Caco-2 (cell line): ENCODE measurements at regions of chr5 and their contacts with region 1.

Region 1: DNA sequence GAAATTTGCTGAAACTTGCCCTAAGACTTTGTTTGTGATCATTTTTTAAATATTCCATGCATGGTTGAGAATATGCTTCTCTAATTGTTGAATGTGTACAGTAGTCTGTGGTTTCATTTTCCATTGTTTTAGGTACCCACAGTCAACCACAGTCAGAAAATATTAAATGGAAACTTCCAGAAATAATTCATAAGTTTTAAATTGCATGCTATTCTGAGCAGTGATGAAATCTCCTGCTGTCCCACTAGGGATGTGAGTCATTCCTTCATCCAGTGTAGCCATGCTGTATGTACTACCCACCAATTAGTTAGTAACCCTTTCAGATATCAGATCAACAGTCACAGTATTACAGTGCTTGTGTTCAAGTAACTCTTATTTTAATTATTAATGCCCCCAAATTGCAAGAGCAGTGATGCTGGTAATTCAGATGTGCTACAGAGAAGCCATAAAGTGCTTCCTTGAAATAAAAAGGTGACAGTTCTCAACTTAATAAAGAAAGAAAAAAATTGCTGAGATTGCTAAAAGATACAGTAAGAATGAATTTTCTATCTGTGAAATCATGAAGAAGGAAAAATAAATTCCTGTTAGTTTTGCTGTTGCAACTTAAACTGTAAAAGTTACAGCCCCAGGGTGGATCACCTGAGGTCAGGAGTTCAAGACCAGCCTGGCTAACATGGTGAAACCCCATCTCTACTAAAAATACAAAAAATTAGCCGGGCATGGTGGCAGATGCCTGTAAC is 79.9 kb upstream of the FBXL17 start:
- DNase-seq: no peak
- H3K4me3 ChIP-seq: no peak overlapping the region
- H3K4me3 Mint-ChIP-seq: no peak overlapping the region
- H3K27ac Mint-ChIP-seq: no peak overlapping the region
- H3K4me1 ChIP-seq: no peaks in the 10 kb centered on the region
- H3K4me1 Mint-ChIP-seq: no peaks in the 10 kb centered on the region
- H3K27me3 ChIP-seq: no peaks in the 10 kb centered on the region
- H3K27me3 Mint-ChIP-seq: peaks cover 6% of the 10 kb centered on the region
- CTCF ChIP-seq: no peak

Region 2: DNA sequence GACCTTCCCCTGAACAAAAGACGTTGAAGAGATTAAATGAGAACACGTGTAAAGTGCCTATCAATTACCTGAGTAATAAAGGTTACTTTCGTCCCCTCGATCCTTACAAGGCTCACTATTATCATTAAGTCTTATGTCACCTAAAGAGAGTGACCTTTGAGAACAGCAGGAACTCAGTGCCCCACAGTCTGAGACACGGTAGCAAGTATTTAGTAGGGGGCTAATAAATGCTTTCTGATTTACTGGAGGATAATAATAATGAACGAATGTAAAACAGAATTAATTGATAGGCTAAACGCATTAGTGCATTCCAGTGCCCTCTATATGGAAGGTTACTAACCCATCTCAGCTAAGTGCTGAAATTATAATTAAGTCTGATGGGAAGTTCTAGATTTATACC is 279.8 kb before region 1 on chr5:
- CTCF ChIA-PET with region 1: no interaction called
- POLR2A ChIA-PET with region 1: no interaction called
- intact Hi-C with region 1: no loop called
- DNase-seq: no peak
- H3K4me3 ChIP-seq: no peak overlapping the region
- H3K4me3 Mint-ChIP-seq: no peak overlapping the region
- H3K27ac Mint-ChIP-seq: no peak overlapping the region
- H3K4me1 ChIP-seq: no peaks in the 10 kb centered on the region
- H3K4me1 Mint-ChIP-seq: no peaks in the 10 kb centered on the region
- H3K27me3 ChIP-seq: no peaks in the 10 kb centered on the region
- H3K27me3 Mint-ChIP-seq: no peaks in the 10 kb centered on the region
- CTCF ChIP-seq: no peak

Region 3: DNA sequence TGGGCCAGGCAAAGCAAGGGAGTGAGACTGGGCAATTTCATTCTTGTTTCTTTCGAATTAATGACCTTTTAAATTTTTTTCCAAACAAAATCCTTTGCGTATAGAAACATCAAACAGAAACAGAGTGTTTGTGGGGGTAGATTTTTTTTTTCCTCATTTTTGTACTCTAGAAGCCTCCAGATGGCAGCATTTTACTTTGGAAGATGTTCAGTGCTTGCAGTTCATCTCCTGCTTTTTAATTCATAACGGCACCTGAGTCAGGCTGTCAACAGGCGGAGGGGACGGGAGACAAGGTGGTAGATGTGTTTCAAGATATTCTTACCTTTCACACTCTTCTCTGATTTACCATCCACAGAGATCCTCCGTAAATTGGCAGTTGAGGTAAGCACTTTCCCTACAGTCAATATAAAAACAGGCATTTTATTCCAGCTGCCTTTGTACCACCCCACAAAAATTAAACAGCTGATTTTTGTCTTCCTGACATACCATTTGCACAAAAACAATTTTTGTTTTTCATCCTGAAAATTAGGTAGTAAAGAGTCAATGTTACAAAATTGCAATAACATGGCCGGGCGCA is 19.6 kb after region 1 on chr5:
- CTCF ChIA-PET with region 1: no interaction called
- POLR2A ChIA-PET with region 1: no interaction called
- intact Hi-C with region 1: loop called (anchors 1 kb)
- DNase-seq: peak; percentile 35 to 51
- H3K4me3 ChIP-seq: no peak overlapping the region
- H3K4me3 Mint-ChIP-seq: no peak overlapping the region
- H3K27ac Mint-ChIP-seq: no peak overlapping the region
- H3K4me1 ChIP-seq: no peaks in the 10 kb centered on the region
- H3K4me1 Mint-ChIP-seq: no peaks in the 10 kb centered on the region
- H3K27me3 ChIP-seq: no peaks in the 10 kb centered on the region
- H3K27me3 Mint-ChIP-seq: peaks cover 10% of the 10 kb centered on the region
- CTCF ChIP-seq: peak; percentile 44 to 51